Caco-2 (cell line): ENCODE measurements at regions of chr2 and their contacts with region 1.

Region 1: DNA sequence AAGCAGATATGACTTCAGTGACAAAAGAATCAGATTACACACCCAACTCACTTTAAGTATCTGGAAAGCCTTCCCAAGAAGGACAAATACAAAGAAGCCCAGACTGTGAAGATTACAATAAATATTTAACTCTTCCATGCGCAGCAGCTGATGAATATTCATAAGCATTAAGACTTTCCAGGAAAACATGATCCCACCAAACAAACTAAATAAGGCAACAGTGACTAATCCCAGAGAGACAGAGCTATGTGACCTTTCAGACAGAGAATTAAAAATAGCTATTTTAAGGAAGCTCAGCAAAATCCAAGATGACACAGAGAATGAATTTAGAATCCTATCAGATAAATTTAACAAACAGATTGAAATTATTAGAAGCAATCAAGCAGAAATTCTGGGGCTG is 108.2 kb upstream of the UBE2E3 start:
- DNase-seq: no peak
- H3K4me3 ChIP-seq: no peak overlapping the region
- H3K4me3 Mint-ChIP-seq: no peak overlapping the region
- H3K27ac Mint-ChIP-seq: no peak overlapping the region
- H3K4me1 ChIP-seq: no peaks in the 10 kb centered on the region
- H3K4me1 Mint-ChIP-seq: no peaks in the 10 kb centered on the region
- H3K27me3 ChIP-seq: no peaks in the 10 kb centered on the region
- H3K27me3 Mint-ChIP-seq: peaks cover 3% of the 10 kb centered on the region
- CTCF ChIP-seq: no peak

Region 2: GRCh38 chr2:180682871-180683270 is 189.4 kb before region 1 on chr2:
- CTCF ChIA-PET with region 1: no interaction called
- POLR2A ChIA-PET with region 1: no interaction called
- intact Hi-C with region 1: no loop called
- DNase-seq: no peak
- H3K4me3 ChIP-seq: no peak overlapping the region
- H3K4me3 Mint-ChIP-seq: no peak overlapping the region
- H3K27ac Mint-ChIP-seq: no peak overlapping the region
- H3K4me1 ChIP-seq: no peaks in the 10 kb centered on the region
- H3K4me1 Mint-ChIP-seq: no peaks in the 10 kb centered on the region
- H3K27me3 ChIP-seq: no peaks in the 10 kb centered on the region
- H3K27me3 Mint-ChIP-seq: peaks cover 6% of the 10 kb centered on the region
- CTCF ChIP-seq: no peak

Region 3: DNA sequence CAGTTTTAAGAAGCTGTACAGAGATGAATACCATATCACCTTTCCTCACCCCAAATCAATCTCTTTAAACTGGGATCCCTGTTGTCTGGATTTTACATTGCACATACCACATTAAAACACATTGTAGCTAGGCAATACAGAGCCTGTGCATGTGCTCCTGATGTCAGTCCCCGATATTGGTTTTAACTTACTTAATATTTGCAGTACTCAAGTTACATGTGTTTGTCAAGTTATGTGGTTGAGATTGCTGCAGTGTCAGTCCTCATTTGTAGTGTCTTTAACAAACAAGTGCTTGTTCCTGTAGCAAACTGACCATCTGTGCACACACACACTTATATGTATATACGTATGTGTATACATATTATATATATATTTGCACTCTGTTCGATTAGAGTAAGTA is 97.8 kb after region 1 on chr2:
- CTCF ChIA-PET with region 1: no interaction called
- POLR2A ChIA-PET with region 1: no interaction called
- intact Hi-C with region 1: no loop called
- DNase-seq: no peak
- H3K4me3 ChIP-seq: no peak overlapping the region
- H3K4me3 Mint-ChIP-seq: no peak overlapping the region
- H3K27ac Mint-ChIP-seq: no peak overlapping the region
- H3K4me1 ChIP-seq: no peaks in the 10 kb centered on the region
- H3K4me1 Mint-ChIP-seq: no peaks in the 10 kb centered on the region
- H3K27me3 ChIP-seq: no peaks in the 10 kb centered on the region
- H3K27me3 Mint-ChIP-seq: peaks cover 4% of the 10 kb centered on the region
- CTCF ChIP-seq: no peak

Region 4: GRCh38 chr2:181058378-181059269 is 186.4 kb after region 1 on chr2:
- CTCF ChIA-PET with region 1: no interaction called
- POLR2A ChIA-PET with region 1: no interaction called
- intact Hi-C with region 1: loop called (anchors 1 kb)
- DNase-seq: peak in 1 of 2 experiments; percentile 28
- H3K4me3 ChIP-seq: no peak overlapping the region
- H3K4me3 Mint-ChIP-seq: no peak overlapping the region
- H3K27ac Mint-ChIP-seq: no peak overlapping the region
- H3K4me1 ChIP-seq: no peaks in the 10 kb centered on the region
- H3K4me1 Mint-ChIP-seq: no peaks in the 10 kb centered on the region
- H3K27me3 ChIP-seq: no peaks in the 10 kb centered on the region
- H3K27me3 Mint-ChIP-seq: peaks cover 2% of the 10 kb centered on the region
- CTCF ChIP-seq: peak; percentile 57 to 73

Region 5: GRCh38 chr2:181203412-181203811 is 331.2 kb after region 1 on chr2:
- CTCF ChIA-PET with region 1: no interaction called
- POLR2A ChIA-PET with region 1: no interaction called
- intact Hi-C with region 1: no loop called
- DNase-seq: no peak
- H3K4me3 ChIP-seq: no peak overlapping the region
- H3K4me3 Mint-ChIP-seq: no peak overlapping the region
- H3K27ac Mint-ChIP-seq: no peak overlapping the region
- H3K4me1 ChIP-seq: no peaks in the 10 kb centered on the region
- H3K4me1 Mint-ChIP-seq: no peaks in the 10 kb centered on the region
- H3K27me3 ChIP-seq: no peaks in the 10 kb centered on the region
- H3K27me3 Mint-ChIP-seq: peaks cover 3% of the 10 kb centered on the region
- CTCF ChIP-seq: no peak

Region 6: GRCh38 chr2:181235683-181236459 is 363.6 kb after region 1 on chr2:
- CTCF ChIA-PET with region 1: no interaction called
- POLR2A ChIA-PET with region 1: no interaction called
- intact Hi-C with region 1: no loop called
- DNase-seq: no peak
- H3K4me3 ChIP-seq: no peak overlapping the region
- H3K4me3 Mint-ChIP-seq: no peak overlapping the region
- H3K27ac Mint-ChIP-seq: no peak overlapping the region
- H3K4me1 ChIP-seq: no peaks in the 10 kb centered on the region
- H3K4me1 Mint-ChIP-seq: no peaks in the 10 kb centered on the region
- H3K27me3 ChIP-seq: no peaks in the 10 kb centered on the region
- H3K27me3 Mint-ChIP-seq: peaks cover 12% of the 10 kb centered on the region
- CTCF ChIP-seq: no peak